Activated CD4-positive, alpha-beta T cell treated with anti-CD3 and anti-CD28 coated beads for 36 hours (primary cell): ENCODE measurements at regions of chr15 and their contacts with region 1.

Region 1: GRCh38 chr15:40807028-40807887 is at the starts of genes DNAJC17 and ZFYVE19:
- DNase-seq: peak; percentile 97
- ATAC-seq: peak; percentile 98
- H3K4me3 Mint-ChIP-seq: peak within 1 kb of the TSS; percentile 91
- H3K27ac Mint-ChIP-seq: peak within 1 kb of the TSS; percentile 96
- H3K4me1 Mint-ChIP-seq: peaks cover 19% of the 10 kb centered on the region
- H3K27me3 Mint-ChIP-seq: no peaks in the 10 kb centered on the region
- total RNA-seq, gene DNAJC17: 41.5 to 43.6 TPM
- total RNA-seq, gene ZFYVE19: 27.5 to 33.7 TPM

Region 2: DNA sequence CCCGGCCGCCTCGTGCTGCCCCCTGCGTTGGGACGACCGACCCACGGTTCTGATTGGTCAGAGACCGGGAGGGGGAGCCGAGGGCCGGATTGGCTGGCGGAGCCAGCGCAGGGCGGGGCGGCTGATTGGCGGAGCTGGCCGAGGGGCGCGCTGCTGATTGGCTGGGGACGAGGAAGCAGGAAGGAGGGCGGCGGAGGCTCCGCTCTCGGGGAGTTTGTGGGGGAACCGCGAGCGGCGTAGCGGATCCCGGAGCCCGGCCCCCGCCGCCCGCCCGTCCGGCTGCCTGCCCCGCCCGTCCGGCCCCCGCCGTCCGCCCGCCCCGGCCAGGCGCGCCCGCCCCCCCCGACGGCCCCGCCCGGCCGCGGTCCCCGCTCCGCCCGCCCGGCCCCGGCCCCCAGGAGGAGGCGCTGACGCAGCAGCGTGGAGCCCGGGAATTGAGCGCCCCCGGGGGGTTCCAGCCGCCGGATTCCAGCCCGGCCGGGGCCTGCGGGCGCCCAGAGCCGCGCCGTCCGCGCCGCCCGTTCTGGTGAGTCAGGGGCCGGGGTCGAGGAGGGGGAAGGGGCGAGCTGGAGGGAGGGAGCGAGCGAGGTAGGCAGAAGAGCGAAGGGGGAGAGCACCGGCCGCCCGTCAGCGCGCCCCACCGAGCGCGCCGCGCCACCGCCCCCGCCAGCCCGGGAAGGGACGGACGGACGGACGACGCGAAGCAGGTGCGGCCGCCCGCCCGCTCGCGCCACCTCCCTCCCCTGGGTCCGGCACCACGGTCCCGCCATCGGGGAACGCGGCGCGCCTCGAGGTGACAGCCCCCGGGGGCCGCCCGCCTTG is 366.3 kb before region 1 on chr15 and contains the start of gene BAHD1:
- CTCF ChIA-PET with region 1: interaction called, 3 read pairs
- POLR2A ChIA-PET with region 1: no interaction called
- intact Hi-C with region 1: loop called in 1 of 2 experiments (anchors 1 kb)
- DNase-seq: peak; percentile 97
- ATAC-seq: peak; percentile 92
- H3K4me3 Mint-ChIP-seq: peak within 1 kb of the TSS; percentile 82
- H3K27ac Mint-ChIP-seq: peak within 1 kb of the TSS; percentile 75
- H3K4me1 Mint-ChIP-seq: peaks cover 56% of the 10 kb centered on the region
- H3K27me3 Mint-ChIP-seq: peaks cover 29% of the 10 kb centered on the region
- total RNA-seq, gene BAHD1: 15.3 to 16.7 TPM

Region 3: DNA sequence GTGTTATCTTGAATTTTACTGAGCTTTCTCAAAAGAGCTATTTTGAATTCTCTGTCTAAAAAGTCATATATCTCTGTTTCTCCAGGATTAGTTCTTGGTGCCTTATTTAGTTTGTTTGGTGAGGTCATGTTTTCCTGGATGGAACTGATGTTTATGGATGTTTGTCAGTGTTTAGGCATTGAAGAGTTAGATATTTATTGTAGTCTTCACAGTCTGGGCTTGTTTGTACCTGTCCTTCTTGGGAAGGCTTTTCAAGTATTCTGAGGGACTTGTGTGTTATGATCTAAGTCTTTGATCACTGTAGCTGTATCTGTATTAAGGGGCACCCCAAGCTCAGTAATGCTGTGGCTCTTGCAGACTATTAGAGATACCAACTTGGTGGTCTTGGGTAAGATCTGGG is 122.9 kb before region 1 on chr15:
- CTCF ChIA-PET with region 1: no interaction called
- POLR2A ChIA-PET with region 1: no interaction called
- intact Hi-C with region 1: loop called in 1 of 2 experiments (anchors 1 kb)
- DNase-seq: no peak
- ATAC-seq: no peak
- H3K4me3 Mint-ChIP-seq: no peak overlapping the region
- H3K27ac Mint-ChIP-seq: no peak overlapping the region
- H3K4me1 Mint-ChIP-seq: no peaks in the 10 kb centered on the region
- H3K27me3 Mint-ChIP-seq: no peaks in the 10 kb centered on the region

Region 4: GRCh38 chr15:40763801-40764732 is 43.2 kb before region 1 on chr15 and contains the start of gene GCHFR:
- CTCF ChIA-PET with region 1: no interaction called
- POLR2A ChIA-PET with region 1: no interaction called
- intact Hi-C with region 1: loop called (anchors 1 to 2 kb)
- DNase-seq: peak; percentile 85
- ATAC-seq: peak; percentile 73
- H3K4me3 Mint-ChIP-seq: peak within 1 kb of the TSS; percentile 79
- H3K27ac Mint-ChIP-seq: peak within 1 kb of the TSS; percentile 90
- H3K4me1 Mint-ChIP-seq: peaks cover 35% of the 10 kb centered on the region
- H3K27me3 Mint-ChIP-seq: no peaks in the 10 kb centered on the region
- total RNA-seq, gene GCHFR: 32.8 to 41.1 TPM

Region 5: GRCh38 chr15:41331833-41332787 is 524.9 kb after region 1 on chr15 and contains the start of gene OIP5:
- CTCF ChIA-PET with region 1: no interaction called
- POLR2A ChIA-PET with region 1: interaction called, 3 read pairs
- intact Hi-C with region 1: loop called in 1 of 2 experiments (anchors 1 kb)
- DNase-seq: peak; percentile 99
- ATAC-seq: peak; percentile 98
- H3K4me3 Mint-ChIP-seq: peak within 1 kb of the TSS; percentile 91
- H3K27ac Mint-ChIP-seq: peak within 1 kb of the TSS; percentile 92
- H3K4me1 Mint-ChIP-seq: peaks cover 26% of the 10 kb centered on the region
- H3K27me3 Mint-ChIP-seq: no peaks in the 10 kb centered on the region
- total RNA-seq, gene OIP5: 11.5 to 14.0 TPM